A549 (cell line): ENCODE measurements at regions of chr5 and their contacts with region 1.

Region 1: DNA sequence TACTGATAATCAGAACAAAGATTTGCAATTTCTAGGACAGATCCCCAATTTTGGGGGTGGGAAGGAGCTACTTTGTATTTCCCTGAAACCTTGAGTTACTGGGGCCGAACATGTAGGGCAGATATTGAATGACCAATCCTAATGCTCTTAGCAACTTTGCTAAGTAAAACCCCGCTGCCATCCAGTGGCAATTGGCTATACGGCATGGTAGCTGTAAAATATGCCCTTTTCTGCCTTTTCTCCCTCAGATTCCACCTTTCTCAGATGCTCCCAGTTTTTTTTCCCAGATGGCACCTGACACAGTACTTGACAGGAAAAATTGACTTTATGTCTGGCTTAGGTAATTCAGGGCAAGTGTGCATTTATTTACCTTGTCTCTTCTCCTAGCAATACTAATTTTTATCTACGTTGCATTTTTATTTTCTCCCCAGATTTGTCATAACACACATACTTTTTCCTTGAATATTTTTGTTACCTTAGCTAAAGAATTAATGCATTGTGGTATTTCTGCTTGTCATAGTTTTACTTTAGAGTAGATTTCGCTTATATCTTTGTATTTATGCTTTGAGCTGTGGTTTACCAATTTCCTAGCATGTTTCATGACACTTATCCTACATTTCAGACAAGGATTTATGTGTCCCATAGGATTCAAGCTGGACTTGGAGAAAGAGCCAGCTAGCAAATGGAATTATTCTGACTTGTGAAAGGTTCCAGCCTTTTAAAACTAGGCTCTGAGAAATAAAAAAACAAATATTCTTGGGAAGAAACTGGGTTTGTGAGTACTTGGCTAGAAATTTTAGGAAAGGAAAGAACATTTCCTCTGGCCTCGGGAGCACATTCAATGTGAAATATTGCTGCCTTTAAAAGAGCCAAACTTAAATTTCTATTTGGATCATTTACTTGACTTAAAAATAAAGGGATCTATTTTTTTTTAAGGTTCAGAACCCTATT is 37.4 kb downstream of the PIK3R1 start:
- DNase-seq: peak; percentile 64 to 67
- ATAC-seq: peak; percentile 96
- H3K4me3 ChIP-seq: no peak overlapping the region
- H3K27ac ChIP-seq: no peak overlapping the region
- H3K4me1 ChIP-seq: 0 out of 3 replicates have a peak, but pooled peaks cover 4% of the 10 kb centered on the region
- CTCF ChIP-seq: peak; percentile 79
- EP300 ChIP-seq: no peak
- POLR2A ChIP-seq: no peak
- RAD21 ChIP-seq: peak; percentile 89 to 90

Region 2: DNA sequence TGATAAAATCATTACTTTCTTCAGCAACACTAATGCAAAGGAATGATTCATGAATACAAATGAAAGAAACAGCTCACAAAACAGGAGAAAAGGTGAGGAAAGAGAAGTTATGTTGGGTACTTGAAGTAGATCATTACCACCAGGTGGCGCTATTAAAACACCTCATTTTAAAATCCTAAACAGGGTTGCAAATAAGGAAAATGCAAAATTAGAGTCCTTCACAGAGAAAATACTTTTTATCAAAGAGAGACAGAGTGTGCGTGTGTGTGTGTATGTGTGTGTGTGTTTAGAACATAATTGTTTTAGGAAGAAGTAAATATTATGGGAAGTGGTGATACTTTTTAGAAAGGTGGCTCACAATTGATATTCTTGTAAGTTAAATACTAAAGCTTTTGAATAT is 1006.8 kb before region 1 on chr5:
- CTCF ChIA-PET with region 1: interaction called, 35 read pairs
- POLR2A ChIA-PET with region 1: no interaction called
- DNase-seq: peak; percentile 5 to 71
- ATAC-seq: peak; percentile 54 to 72; a peak in 4 of 6 replicates
- H3K4me3 ChIP-seq: no peak overlapping the region
- H3K27ac ChIP-seq: peak overlapping the region in 1 of 2 experiments; percentile 18; a peak in 1 of 6 replicates
- H3K4me1 ChIP-seq: no peaks in the 10 kb centered on the region
- CTCF ChIP-seq: peak; percentile 88
- EP300 ChIP-seq: no peak
- POLR2A ChIP-seq: no peak
- RAD21 ChIP-seq: peak; percentile 82 to 91

Region 3: DNA sequence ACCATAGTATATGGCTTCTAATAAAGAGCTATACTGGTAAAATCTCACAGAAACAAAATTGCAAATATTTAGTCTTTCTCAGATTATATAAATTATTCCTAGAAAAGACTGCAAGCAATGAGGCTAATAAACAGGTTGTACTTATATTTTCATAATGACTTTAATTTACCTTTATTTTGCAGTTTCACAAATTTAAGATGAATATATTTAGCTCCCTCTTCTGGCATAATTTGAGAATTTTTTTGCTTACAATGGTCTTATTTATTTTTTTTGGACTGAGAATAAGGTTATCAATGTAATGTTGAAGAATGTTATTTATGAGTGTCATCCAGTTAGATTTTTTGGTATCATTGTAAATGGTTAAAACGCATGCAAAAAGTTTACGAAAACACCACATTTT is 19.3 kb after region 1 on chr5:
- CTCF ChIA-PET with region 1: interaction called, 13 read pairs
- POLR2A ChIA-PET with region 1: no interaction called
- DNase-seq: no peak
- ATAC-seq: no peak
- H3K4me3 ChIP-seq: no peak overlapping the region
- H3K27ac ChIP-seq: no peak overlapping the region
- H3K4me1 ChIP-seq: peaks cover 10% of the 10 kb centered on the region; the same call in 2 of the 3 replicates
- CTCF ChIP-seq: peak; percentile 42; the same call in 2 of the 3 replicates
- EP300 ChIP-seq: no peak
- POLR2A ChIP-seq: no peak
- RAD21 ChIP-seq: peak; percentile 48 to 61